Motor neuron (in vitro differentiated cells): ENCODE measurements at regions of chr2 and their contacts with region 1.

Region 1: GRCh38 chr2:221573430-221574230 is 1.5 kb upstream of the EPHA4 start:
- ATAC-seq: peak; percentile 60 to 74 (median 70)
- H3K4me3 ChIP-seq: peak overlapping the region; percentile 53 to 60 (median 56)
- H3K27ac ChIP-seq: peak overlapping the region in 1 of 2 donors; percentile 5
- H3K4me1 ChIP-seq: peaks cover 0 to 8% of the 10 kb centered on the region in 2 donors

Region 2: DNA sequence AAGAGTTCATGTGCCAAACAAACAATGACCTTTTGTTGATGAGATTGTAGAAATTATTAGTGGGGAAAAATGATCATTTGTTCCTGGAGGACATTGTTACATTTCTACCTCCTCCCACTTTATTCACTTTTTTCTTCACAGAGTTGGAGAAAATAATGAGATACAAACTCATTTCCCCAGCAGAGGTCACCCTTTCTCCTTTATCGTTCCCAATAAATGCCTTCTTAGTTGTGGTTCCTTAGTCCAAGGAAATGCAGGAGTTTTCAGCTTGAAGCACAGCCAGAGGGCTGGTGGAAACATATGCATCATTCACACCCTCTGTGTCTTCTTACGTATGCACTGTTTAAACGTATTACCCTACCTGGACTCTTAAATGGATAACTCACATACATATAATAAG is 1837.4 kb before region 1 on chr2:
- in situ Hi-C with region 1: loop called in 4 of 9 experiments (anchors 10 to 25 kb)
- ATAC-seq: peak; percentile 69 to 86 (median 76)
- H3K4me3 ChIP-seq: no peak overlapping the region
- H3K27ac ChIP-seq: no peak overlapping the region
- H3K4me1 ChIP-seq: peaks cover 0 to 4% of the 10 kb centered on the region in 2 donors

Region 3: DNA sequence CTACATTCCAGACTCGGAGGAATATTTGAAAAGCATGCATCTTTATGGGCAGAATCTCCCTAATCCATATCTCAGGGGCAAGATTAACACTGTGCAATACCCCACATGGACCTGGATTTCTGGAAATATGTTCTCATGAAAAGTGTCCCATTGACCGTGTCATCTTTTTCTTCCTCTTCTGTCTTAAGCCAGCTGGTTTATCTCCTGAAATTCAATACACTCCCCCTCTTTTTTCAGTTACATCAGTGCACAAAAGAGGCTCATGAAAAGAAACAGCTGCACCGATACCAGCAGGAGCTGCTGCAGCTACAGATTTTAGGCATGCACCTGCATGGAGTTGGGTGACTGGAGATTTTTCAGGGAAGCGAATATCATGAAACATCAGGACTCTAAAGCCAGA is 1829.0 kb before region 1 on chr2:
- in situ Hi-C with region 1: loop called in 4 of 9 experiments (anchors 10 to 25 kb)
- ATAC-seq: peak in 1 of 8 experiments; percentile 91
- H3K4me3 ChIP-seq: no peak overlapping the region
- H3K27ac ChIP-seq: no peak overlapping the region
- H3K4me1 ChIP-seq: peaks cover 4% of the 10 kb centered on the region in 2 donors

Region 4: GRCh38 chr2:220687231-220687843 is 886.3 kb before region 1 on chr2:
- in situ Hi-C with region 1: loop called in 5 of 9 experiments (anchors 25 kb)
- ATAC-seq: peak; percentile 60 to 87 (median 80)
- H3K4me3 ChIP-seq: no peak overlapping the region
- H3K27ac ChIP-seq: no peak overlapping the region
- H3K4me1 ChIP-seq: no peaks in the 10 kb centered on the region

Region 5: GRCh38 chr2:221104361-221104811 is 469.2 kb before region 1 on chr2:
- in situ Hi-C with region 1: loop called in 1 of 9 experiments (anchors 25 kb)
- ATAC-seq: peak; percentile 63 to 96 (median 82)
- H3K4me3 ChIP-seq: no peak overlapping the region
- H3K27ac ChIP-seq: no peak overlapping the region
- H3K4me1 ChIP-seq: no peaks in the 10 kb centered on the region

Region 6: GRCh38 chr2:221176667-221177066 is 397.0 kb before region 1 on chr2:
- in situ Hi-C with region 1: loop called in 1 of 9 experiments (anchors 25 kb)
- ATAC-seq: no peak
- H3K4me3 ChIP-seq: no peak overlapping the region
- H3K27ac ChIP-seq: no peak overlapping the region
- H3K4me1 ChIP-seq: no peaks in the 10 kb centered on the region

Region 7: DNA sequence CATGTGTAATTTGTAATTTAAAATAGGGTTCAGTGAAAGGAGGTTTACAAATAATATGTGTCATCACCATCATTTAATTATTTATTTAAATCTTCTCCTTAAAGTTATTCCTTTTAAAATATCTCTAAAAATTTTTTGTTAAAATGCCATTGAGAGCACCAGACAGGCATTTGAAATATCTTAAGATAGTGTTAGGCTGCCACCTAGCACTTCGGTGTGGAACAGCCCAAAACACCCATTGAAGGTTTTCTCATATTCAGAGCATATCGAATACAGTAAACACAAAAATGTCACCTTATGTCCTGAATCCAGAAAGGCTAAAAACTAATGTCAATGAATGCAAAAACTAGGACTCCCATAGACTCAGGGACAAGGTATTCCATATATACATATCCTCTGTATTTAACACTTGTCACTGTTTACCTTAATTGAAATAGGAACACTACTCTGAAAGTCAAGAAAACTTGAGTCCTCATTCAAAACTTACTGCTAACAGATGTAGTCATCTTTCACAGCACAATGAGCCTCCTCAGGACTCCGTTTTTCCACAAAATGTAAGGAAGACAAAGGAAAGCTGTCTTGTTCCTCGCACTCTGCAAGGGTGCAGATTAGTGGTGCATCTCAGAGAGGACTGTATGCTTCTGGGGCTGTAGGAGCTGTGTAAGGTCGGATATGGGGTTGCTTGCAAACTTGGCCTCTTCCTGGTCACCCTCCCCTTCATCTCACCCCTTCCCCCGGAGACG is 395.6 kb after region 1 on chr2:
- in situ Hi-C with region 1: loop called in 5 of 9 experiments (anchors 10 to 25 kb)
- ATAC-seq: peak in 6 of 8 experiments; percentile 60 to 80 (median 68)
- H3K4me3 ChIP-seq: no peak overlapping the region
- H3K27ac ChIP-seq: no peak overlapping the region
- H3K4me1 ChIP-seq: peaks cover 8 to 19% of the 10 kb centered on the region in 2 donors